ENCODE measurements at regions of chr9 and their contacts with region 1.

Region 1: DNA sequence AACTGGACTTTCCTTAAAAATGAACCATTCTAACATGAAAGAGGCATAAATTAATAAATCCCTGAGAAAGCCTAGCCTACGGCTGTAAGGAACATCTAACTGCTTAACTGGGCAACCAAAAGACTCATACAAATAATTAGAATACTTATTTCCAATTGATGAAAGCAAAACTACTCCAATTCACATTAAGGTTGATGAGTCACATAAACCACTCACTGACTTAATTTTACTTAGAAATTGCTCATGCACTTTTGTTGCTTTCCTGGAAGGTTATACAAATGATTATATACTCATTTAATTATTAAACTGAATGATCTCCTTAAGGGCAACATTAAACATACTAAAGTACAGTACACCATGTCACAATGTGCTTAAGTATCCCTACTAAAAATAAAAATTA is 101.9 kb downstream of the NFIB start:
- DNase-seq: peak; percentile 59
- H3K4me3 ChIP-seq: peak overlapping the region in 1 of 3 experiments; percentile 33
- H3K27ac ChIP-seq: peak overlapping the region; percentile 41
- H3K4me1 ChIP-seq: peaks cover 79% of the 10 kb centered on the region
- H3K27me3 ChIP-seq: no peaks in the 10 kb centered on the region
- CTCF ChIP-seq: no peak
- POLR2A ChIP-seq: no peak

Region 2: GRCh38 chr9:13705918-13706317 is 506.2 kb before region 1 on chr9:
- CTCF ChIA-PET with region 1: no interaction called
- POLR2A ChIA-PET with region 1: no interaction called
- dilution Hi-C with region 1: no loop called
- intact Hi-C with region 1: loop called (anchors 5 kb)
- DNase-seq: peak; percentile 81
- H3K4me3 ChIP-seq: no peak overlapping the region
- H3K27ac ChIP-seq: peak overlapping the region; percentile 80
- H3K4me1 ChIP-seq: peaks cover 39% of the 10 kb centered on the region
- H3K27me3 ChIP-seq: no peaks in the 10 kb centered on the region
- CTCF ChIP-seq: no peak
- POLR2A ChIP-seq: no peak

Region 3: DNA sequence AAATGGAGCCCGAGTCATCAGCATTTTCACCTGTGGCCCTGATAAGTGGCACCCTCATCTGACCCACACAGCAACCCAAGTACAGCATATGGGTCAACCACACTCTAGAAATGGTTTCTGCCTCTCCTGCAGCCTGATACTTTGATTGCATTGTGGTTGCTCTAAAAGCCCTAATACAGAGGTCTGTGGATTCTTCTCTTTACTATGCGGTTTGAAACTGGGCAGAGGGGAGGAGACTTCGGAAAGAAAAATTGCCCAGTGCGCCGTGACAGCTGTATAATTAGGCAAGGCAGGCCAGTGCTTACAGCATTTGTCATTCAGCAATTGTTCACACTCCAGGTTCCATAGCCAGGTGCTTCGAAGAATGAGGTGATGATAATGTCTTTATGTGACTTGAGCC is 259.2 kb before region 1 on chr9:
- CTCF ChIA-PET with region 1: no interaction called
- POLR2A ChIA-PET with region 1: no interaction called
- dilution Hi-C with region 1: no loop called
- intact Hi-C with region 1: no loop called
- DNase-seq: no peak
- H3K4me3 ChIP-seq: no peak overlapping the region
- H3K27ac ChIP-seq: no peak overlapping the region
- H3K4me1 ChIP-seq: peaks cover 10% of the 10 kb centered on the region
- H3K27me3 ChIP-seq: no peaks in the 10 kb centered on the region
- CTCF ChIP-seq: no peak
- POLR2A ChIP-seq: no peak

Region 4: GRCh38 chr9:14156046-14156445 is 56.0 kb before region 1 on chr9:
- CTCF ChIA-PET with region 1: no interaction called
- POLR2A ChIA-PET with region 1: no interaction called
- dilution Hi-C with region 1: no loop called
- intact Hi-C with region 1: loop called (anchors 5 kb)
- DNase-seq: no peak
- H3K4me3 ChIP-seq: no peak overlapping the region
- H3K27ac ChIP-seq: peak overlapping the region; percentile 77
- H3K4me1 ChIP-seq: peaks cover 62% of the 10 kb centered on the region
- H3K27me3 ChIP-seq: no peaks in the 10 kb centered on the region
- CTCF ChIP-seq: no peak
- POLR2A ChIP-seq: no peak

Region 5: DNA sequence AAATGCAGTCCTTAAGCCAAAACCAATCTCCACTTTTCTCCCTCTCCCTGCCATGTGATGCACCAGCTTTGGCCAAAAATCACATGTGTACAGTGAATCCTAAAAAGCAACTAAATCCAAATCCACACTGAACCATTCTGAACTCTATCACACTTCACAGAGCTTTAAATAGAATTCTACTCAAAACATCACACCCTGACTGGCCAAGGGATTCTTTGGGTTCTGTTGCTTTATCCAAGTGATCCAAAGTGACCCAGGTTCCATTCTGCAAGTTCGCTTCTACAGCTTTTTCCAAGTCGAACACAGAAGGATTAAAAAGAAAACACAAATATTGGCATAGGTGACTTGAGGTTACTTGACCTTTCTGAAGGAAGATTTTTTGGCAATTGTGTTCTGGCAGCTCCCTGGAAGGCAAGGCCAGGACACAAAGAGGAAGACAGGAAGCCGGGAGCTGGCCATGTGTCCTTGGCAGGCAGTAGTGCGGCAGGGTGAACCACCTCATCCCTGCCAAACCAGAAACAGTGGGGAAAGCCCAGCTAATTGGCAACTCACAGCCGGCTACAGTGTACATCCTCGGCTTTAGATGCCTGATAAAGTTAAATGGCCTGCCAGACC is 13.1 kb before region 1 on chr9:
- CTCF ChIA-PET with region 1: interaction called, 12 read pairs
- POLR2A ChIA-PET with region 1: interaction called, 3 read pairs
- dilution Hi-C with region 1: no loop called
- intact Hi-C with region 1: no loop called
- DNase-seq: peak; percentile 62
- H3K4me3 ChIP-seq: no peak overlapping the region
- H3K27ac ChIP-seq: peak overlapping the region; percentile 59
- H3K4me1 ChIP-seq: peaks cover 60% of the 10 kb centered on the region
- H3K27me3 ChIP-seq: no peaks in the 10 kb centered on the region
- CTCF ChIP-seq: no peak
- POLR2A ChIP-seq: no peak

Region 6: DNA sequence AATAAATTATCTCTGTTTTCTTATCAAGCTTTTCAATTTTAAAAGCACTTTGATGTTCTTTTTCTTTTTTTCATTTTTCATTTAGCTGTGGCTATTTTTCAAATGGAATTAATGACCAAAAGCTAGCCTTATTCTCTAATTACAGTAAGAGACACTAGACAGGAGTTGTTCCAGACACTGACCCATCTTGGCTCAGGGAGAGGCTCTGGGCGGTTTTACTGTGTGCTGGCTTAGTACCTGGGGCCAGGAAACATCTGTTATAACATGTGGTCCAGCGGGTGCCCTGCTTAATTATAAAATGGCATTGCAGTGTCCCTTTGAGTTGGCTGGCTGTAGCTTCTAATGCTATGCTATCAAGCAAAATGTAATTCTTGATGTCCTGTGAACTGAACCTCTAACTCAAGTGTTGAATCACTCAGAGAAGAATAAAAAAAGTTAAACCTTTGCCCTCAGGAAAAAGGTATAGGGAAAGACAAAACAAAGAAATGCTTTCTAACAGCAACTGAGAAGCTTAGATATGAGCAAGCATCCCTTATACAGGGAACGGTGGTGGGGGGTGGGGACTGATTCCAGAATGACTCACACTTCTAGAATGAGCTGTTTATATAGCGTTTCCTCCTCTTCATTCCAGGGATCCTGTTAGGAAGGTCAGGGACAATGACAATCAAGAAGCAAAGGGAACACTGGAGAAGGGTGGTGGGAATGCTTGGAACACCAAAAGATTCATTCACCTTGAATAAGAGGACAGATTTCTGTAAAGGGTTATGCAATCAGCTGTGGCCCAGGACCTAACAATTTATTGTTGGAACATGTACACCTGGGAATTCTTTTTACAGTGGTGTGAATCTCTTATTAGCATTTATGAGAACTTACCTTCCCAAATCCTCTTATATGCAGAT is 160.6 kb after region 1 on chr9:
- CTCF ChIA-PET with region 1: no interaction called
- POLR2A ChIA-PET with region 1: no interaction called
- dilution Hi-C with region 1: no loop called
- intact Hi-C with region 1: loop called (anchors 5 kb)
- DNase-seq: peak; percentile 98
- H3K4me3 ChIP-seq: peak overlapping the region in 1 of 3 experiments; percentile 29
- H3K27ac ChIP-seq: peak overlapping the region; percentile 96
- H3K4me1 ChIP-seq: peaks cover 36% of the 10 kb centered on the region
- H3K27me3 ChIP-seq: no peaks in the 10 kb centered on the region
- CTCF ChIP-seq: no peak
- POLR2A ChIP-seq: peak; percentile 70